ENCODE measurements at regions of chr6 and their contacts with region 1.

Region 1: GRCh38 chr6:71043902-71044301 is 87.0 kb upstream of the B3GAT2 start:
- DNase-seq: peak; percentile 5
- H3K4me3 ChIP-seq: no peak overlapping the region
- H3K27ac ChIP-seq: no peak overlapping the region
- H3K4me1 ChIP-seq: no peaks in the 10 kb centered on the region
- H3K27me3 ChIP-seq: no peaks in the 10 kb centered on the region
- CTCF ChIP-seq: no peak

Region 2: GRCh38 chr6:71349395-71349794 is 305.5 kb after region 1 on chr6:
- CTCF ChIA-PET with region 1: no interaction called
- dilution Hi-C with region 1: no loop called
- in situ Hi-C with region 1: loop called in 1 of 2 experiments (anchors 25 kb)
- intact Hi-C with region 1: no loop called
- DNase-seq: no peak
- H3K4me3 ChIP-seq: no peak overlapping the region
- H3K27ac ChIP-seq: no peak overlapping the region
- H3K4me1 ChIP-seq: peaks cover 8% of the 10 kb centered on the region
- H3K27me3 ChIP-seq: no peaks in the 10 kb centered on the region
- CTCF ChIP-seq: peak; percentile 49 to 68